CD4-positive, alpha-beta T cell (primary cell): ENCODE measurements at regions of chr9 and their contacts with region 1.

Region 1: GRCh38 chr9:8351436-8351835 is 551.9 kb upstream of the DMAC1 start:
- DNase-seq: no peak
- ATAC-seq: no peak
- H3K4me3 ChIP-seq: no peak overlapping the region
- H3K4me3 Mint-ChIP-seq: no peak overlapping the region
- H3K27ac ChIP-seq: no peak overlapping the region
- H3K27ac Mint-ChIP-seq: no peak overlapping the region
- H3K4me1 ChIP-seq: no peaks in the 10 kb centered on the region
- H3K4me1 Mint-ChIP-seq: no peaks in the 10 kb centered on the region
- H3K27me3 ChIP-seq: no peaks in the 10 kb centered on the region
- H3K27me3 Mint-ChIP-seq: no peaks in the 10 kb centered on the region
- CTCF ChIP-seq: no peak

Region 2: GRCh38 chr9:8419596-8420275 is 68.3 kb after region 1 on chr9:
- CTCF ChIA-PET with region 1: no interaction called
- POLR2A ChIA-PET with region 1: no interaction called
- intact Hi-C with region 1: loop called in 1 of 2 experiments (anchors 10 kb)
- DNase-seq: no peak
- ATAC-seq: no peak
- H3K4me3 ChIP-seq: no peak overlapping the region
- H3K4me3 Mint-ChIP-seq: no peak overlapping the region
- H3K27ac ChIP-seq: no peak overlapping the region
- H3K27ac Mint-ChIP-seq: no peak overlapping the region
- H3K4me1 ChIP-seq: no peaks in the 10 kb centered on the region
- H3K4me1 Mint-ChIP-seq: no peaks in the 10 kb centered on the region
- H3K27me3 ChIP-seq: no peaks in the 10 kb centered on the region
- H3K27me3 Mint-ChIP-seq: no peaks in the 10 kb centered on the region
- CTCF ChIP-seq: no peak

Region 3: DNA sequence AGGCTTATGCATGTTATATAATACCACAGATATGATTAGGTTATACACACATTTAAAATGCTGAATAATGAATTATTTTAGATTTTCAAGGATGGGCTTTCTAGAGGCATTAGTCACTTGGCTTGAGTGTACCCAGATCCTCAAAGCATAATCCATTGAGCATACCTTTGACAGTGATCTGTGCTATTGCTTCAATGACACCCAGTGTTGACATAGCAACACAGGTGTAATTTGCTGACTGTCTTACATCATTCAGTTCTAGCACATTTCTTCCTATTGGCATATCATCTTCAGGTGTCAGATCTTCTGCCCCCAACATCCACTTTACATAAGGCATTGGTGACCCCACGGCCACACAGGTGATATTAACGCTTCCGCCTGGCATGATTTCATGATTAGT is 169.7 kb after region 1 on chr9:
- CTCF ChIA-PET with region 1: no interaction called
- POLR2A ChIA-PET with region 1: no interaction called
- intact Hi-C with region 1: no loop called
- DNase-seq: no peak
- ATAC-seq: no peak
- H3K4me3 ChIP-seq: no peak overlapping the region
- H3K4me3 Mint-ChIP-seq: no peak overlapping the region
- H3K27ac ChIP-seq: no peak overlapping the region
- H3K27ac Mint-ChIP-seq: no peak overlapping the region
- H3K4me1 ChIP-seq: no peaks in the 10 kb centered on the region
- H3K4me1 Mint-ChIP-seq: no peaks in the 10 kb centered on the region
- H3K27me3 ChIP-seq: no peaks in the 10 kb centered on the region
- H3K27me3 Mint-ChIP-seq: no peaks in the 10 kb centered on the region
- CTCF ChIP-seq: no peak